Common myeloid progenitor, CD34-positive (primary cell): ENCODE measurements at regions of chr4 and their contacts with region 1.

Region 1: DNA sequence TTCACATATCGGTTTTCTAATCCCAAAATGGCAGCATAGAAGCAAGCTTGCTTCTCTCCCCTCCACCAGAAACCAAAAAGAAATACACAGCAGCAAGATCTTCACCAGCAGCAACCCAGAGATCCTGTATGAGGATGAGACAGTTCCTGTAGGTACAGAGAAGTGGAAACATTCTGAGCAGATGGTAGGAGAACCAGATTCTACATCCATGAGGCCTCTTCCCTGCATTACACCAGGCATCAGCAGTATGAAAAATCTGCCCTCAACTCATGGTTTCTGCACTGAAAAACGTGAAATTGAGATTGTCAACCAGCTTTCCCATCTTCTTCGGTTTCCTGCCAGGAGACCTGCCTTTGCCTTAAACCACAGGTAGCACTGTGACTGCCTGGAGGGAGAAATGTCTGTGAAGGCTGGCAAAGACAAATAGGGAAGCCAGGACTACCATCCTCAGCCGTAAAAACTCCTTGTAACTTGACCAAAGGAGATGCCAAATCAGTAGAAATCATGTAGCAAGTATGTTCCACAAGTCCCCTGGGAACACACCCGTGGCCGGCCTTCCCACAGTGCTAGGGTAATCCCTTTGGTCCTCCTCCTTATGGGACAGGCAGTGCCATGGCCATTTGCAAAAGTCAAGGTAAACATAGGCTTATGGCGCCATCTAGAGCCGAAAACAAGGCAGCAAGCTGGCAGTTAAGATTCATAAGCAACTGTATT is 24.0 kb upstream of the MTHFD2L start:
- DNase-seq: peak; percentile 81 to 89 (median 82)
- H3K4me3 ChIP-seq: no peak overlapping the region
- H3K27ac ChIP-seq: no peak overlapping the region
- H3K4me1 ChIP-seq: peaks cover 0 to 6% (median 2%) of the 10 kb centered on the region in 4 experiments
- H3K27me3 ChIP-seq: no peaks in the 10 kb centered on the region

Region 2: GRCh38 chr4:73653695-73654106 is 480.2 kb before region 1 on chr4:
- CTCF ChIA-PET with region 1: interaction called, 14 read pairs
- POLR2A ChIA-PET with region 1: no interaction called
- DNase-seq: peak; percentile 67 to 89 (median 88)
- H3K4me3 ChIP-seq: no peak overlapping the region
- H3K27ac ChIP-seq: no peak overlapping the region
- H3K4me1 ChIP-seq: peaks cover 0 to 7% (median 7%) of the 10 kb centered on the region in 4 experiments
- H3K27me3 ChIP-seq: no peaks in the 10 kb centered on the region

Region 3: GRCh38 chr4:73662709-73663546 is 471.0 kb before region 1 on chr4:
- CTCF ChIA-PET with region 1: interaction called, 43 read pairs
- POLR2A ChIA-PET with region 1: no interaction called
- DNase-seq: peak; percentile 61 to 81 (median 81)
- H3K4me3 ChIP-seq: no peak overlapping the region
- H3K27ac ChIP-seq: no peak overlapping the region
- H3K4me1 ChIP-seq: peaks cover 5 to 25% (median 12%) of the 10 kb centered on the region in 4 experiments
- H3K27me3 ChIP-seq: no peaks in the 10 kb centered on the region

Region 4: GRCh38 chr4:73869130-73870050 is 264.6 kb before region 1 on chr4 and contains the start of gene CXCL1:
- CTCF ChIA-PET with region 1: interaction called, 14 read pairs
- POLR2A ChIA-PET with region 1: no interaction called
- DNase-seq: peak; percentile 38 to 65 (median 51)
- H3K4me3 ChIP-seq: peak within 1 kb of the TSS; percentile 31 to 85 (median 61)
- H3K27ac ChIP-seq: no peak within 1 kb of the TSS
- H3K4me1 ChIP-seq: peaks cover 8 to 23% (median 17%) of the 10 kb centered on the region in 4 experiments
- H3K27me3 ChIP-seq: peaks cover 0 to 8% (median 0%) of the 10 kb centered on the region in 5 experiments

Region 5: DNA sequence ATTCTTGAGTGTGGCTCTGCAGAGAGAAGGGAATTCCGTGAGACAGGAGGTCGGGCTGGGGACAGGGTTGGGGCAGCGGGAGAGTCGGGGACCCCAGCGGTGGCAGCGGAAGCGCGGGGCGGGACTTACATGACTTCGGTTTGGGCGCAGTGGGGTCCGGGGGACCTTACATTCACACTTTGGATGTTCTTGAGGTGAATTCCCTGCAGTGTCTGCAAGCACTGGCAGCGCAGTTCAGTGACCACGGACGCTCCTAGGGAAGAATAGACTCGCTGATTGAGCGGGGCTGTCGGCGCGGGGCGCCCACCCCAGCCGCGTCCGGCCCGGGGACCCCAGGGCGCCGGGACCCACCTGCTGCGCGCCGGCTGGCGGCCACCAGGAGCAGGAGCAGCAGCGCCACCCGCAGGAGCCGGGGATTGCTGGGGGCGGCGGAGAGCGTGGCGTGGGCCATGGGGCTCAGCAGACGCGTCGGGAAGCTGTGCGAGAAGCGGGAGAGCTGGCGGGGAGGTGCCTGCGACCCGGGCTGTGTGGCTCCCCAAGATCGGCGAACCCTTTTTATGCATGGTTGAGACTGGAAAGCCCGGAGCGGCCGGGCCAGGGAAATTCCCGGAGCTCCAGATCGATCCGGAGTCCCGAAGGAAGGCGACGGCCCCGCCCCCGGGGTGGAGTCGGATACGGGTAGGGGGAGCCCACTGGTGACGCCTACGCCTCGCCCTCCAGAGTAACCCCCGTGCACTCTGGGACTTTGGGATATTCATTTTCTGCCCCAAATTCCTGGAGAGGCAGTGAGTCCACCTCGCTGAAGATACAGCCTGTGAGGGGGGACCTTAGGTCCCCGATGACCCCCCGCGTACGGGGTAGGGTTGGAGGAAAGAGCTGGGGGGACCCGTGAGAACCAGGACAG is 95.5 kb before region 1 on chr4 and contains the start of gene CXCL3:
- CTCF ChIA-PET with region 1: interaction called, 10 read pairs
- POLR2A ChIA-PET with region 1: no interaction called
- DNase-seq: peak; percentile 58 to 82 (median 68)
- H3K4me3 ChIP-seq: peak within 1 kb of the TSS; percentile 78 to 96 (median 88)
- H3K27ac ChIP-seq: peak within 1 kb of the TSS; percentile 89 to 93
- H3K4me1 ChIP-seq: peaks cover 19 to 41% (median 28%) of the 10 kb centered on the region in 4 experiments
- H3K27me3 ChIP-seq: no peaks in the 10 kb centered on the region

Region 6: DNA sequence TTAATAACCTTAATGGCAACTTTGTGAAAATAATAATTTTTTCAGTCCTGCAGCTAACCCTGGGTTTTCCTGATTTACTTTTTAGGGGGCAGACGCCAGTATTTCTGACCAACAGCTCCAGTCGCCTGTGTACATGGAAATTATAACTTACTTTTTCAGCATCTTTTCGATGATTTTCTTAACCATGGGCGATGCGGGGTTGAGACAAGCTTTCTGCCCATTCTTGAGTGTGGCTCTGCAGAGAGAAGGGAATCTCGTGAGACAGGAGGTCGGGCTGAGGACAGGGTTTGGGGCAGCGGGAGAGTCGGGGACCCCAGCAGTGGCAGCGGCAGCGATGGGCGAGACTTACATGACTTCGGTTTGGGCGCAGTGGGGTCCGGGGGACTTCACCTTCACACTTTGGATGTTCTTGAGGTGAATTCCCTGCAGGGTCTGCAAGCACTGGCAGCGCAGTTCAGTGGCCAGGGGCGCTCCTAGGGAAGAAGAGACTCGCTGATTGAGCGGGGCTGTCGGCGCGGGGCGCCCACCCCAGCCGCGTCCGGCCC is 35.4 kb before region 1 on chr4:
- CTCF ChIA-PET with region 1: interaction called, 27 read pairs
- POLR2A ChIA-PET with region 1: no interaction called
- DNase-seq: peak in 1 of 3 donors; percentile 60
- H3K4me3 ChIP-seq: peak overlapping the region; percentile 56 to 93 (median 75)
- H3K27ac ChIP-seq: peak overlapping the region; percentile 76 to 85
- H3K4me1 ChIP-seq: peaks cover 15 to 69% (median 44%) of the 10 kb centered on the region in 4 experiments
- H3K27me3 ChIP-seq: no peaks in the 10 kb centered on the region

Region 7: GRCh38 chr4:74117024-74117534 is 16.9 kb before region 1 on chr4:
- CTCF ChIA-PET with region 1: interaction called, 14 read pairs
- POLR2A ChIA-PET with region 1: no interaction called
- DNase-seq: peak in 1 of 3 donors; percentile 53
- H3K4me3 ChIP-seq: no peak overlapping the region
- H3K27ac ChIP-seq: no peak overlapping the region
- H3K4me1 ChIP-seq: peaks cover 0 to 4% (median 0%) of the 10 kb centered on the region in 4 experiments
- H3K27me3 ChIP-seq: no peaks in the 10 kb centered on the region